Activated CD4-positive, alpha-beta T cell treated with anti-CD3 and anti-CD28 coated beads, Interleukin-2, amount 10 ng/mL, durations not matched to agents 24 days and 14 days (primary cell): ENCODE measurements at regions of chr7 and their contacts with region 1.

Region 1: GRCh38 chr7:157336383-157337315 is at the start of gene DNAJB6:
- DNase-seq: peak; percentile 99
- H3K4me3 Mint-ChIP-seq: peak within 1 kb of the TSS; percentile 97
- H3K27ac Mint-ChIP-seq: peak within 1 kb of the TSS; percentile 99
- H3K4me1 Mint-ChIP-seq: peaks cover 25% of the 10 kb centered on the region
- H3K27me3 Mint-ChIP-seq: peaks cover 18% of the 10 kb centered on the region
- total RNA-seq, gene DNAJB6: 125 and 128 TPM in 2 replicates

Region 2: GRCh38 chr7:156949541-156950380 is 386.9 kb before region 1 on chr7 and contains the start of gene NOM1:
- intact Hi-C with region 1: loop called (anchors 5 kb)
- DNase-seq: peak; percentile 98
- H3K4me3 Mint-ChIP-seq: peak within 1 kb of the TSS; percentile 100
- H3K27ac Mint-ChIP-seq: peak within 1 kb of the TSS; percentile 96
- H3K4me1 Mint-ChIP-seq: peaks cover 28% of the 10 kb centered on the region
- H3K27me3 Mint-ChIP-seq: peaks cover 16% of the 10 kb centered on the region
- total RNA-seq, gene NOM1: 50.5 and 54.5 TPM in 2 replicates

Region 3: DNA sequence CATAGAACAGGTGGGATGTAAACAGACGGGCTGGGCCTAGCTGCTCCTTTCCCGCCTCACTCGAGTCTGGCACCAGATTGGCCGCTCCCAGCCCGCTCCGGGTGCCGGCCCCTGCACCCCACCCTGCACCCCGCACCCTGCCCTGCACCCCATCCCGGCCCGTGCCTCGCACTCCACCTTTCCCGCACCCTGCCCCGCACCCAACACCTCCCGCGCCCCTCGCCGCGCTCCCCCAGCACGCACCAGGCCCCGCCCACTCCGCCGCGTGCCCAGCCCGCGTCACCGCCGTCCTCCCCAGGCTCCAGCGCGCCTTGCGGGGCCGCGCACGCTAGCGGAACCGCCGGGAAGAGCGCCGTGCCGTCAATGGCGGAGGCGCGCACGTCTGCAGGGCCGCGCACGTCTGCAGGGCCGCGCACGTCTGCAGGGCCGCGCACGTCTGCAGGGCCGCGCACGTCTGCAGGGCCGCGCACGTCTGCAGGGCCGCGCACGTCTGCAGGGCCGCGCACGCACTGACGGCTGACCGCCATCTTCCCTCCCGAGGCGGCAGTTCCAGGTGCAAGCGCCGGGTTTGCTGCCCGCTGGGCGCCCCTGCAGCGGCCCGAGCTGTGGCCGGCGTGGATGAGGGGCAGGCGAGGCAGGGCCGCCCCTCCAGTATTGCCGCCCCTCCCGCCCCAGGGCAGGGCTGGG is 198.1 kb before region 1 on chr7 and contains the start of gene UBE3C:
- intact Hi-C with region 1: loop called (anchors 2 kb)
- DNase-seq: peak; percentile 98
- H3K4me3 Mint-ChIP-seq: peak within 1 kb of the TSS; percentile 88
- H3K27ac Mint-ChIP-seq: peak within 1 kb of the TSS; percentile 99
- H3K4me1 Mint-ChIP-seq: peaks cover 31% of the 10 kb centered on the region
- H3K27me3 Mint-ChIP-seq: no peaks in the 10 kb centered on the region
- total RNA-seq, gene UBE3C: 89.9 and 95.4 TPM in 2 replicates

Region 4: GRCh38 chr7:157278791-157279724 is 57.6 kb before region 1 on chr7:
- intact Hi-C with region 1: loop called (anchors 1 kb)
- DNase-seq: peak; percentile 78
- H3K4me3 Mint-ChIP-seq: no peak overlapping the region
- H3K27ac Mint-ChIP-seq: no peak overlapping the region
- H3K4me1 Mint-ChIP-seq: peaks cover 13% of the 10 kb centered on the region
- H3K27me3 Mint-ChIP-seq: peaks cover 2% of the 10 kb centered on the region

Region 5: GRCh38 chr7:157299613-157300368 is 36.9 kb before region 1 on chr7:
- intact Hi-C with region 1: loop called (anchors 1 kb)
- DNase-seq: no peak
- H3K4me3 Mint-ChIP-seq: no peak overlapping the region
- H3K27ac Mint-ChIP-seq: peak overlapping the region; percentile 71
- H3K4me1 Mint-ChIP-seq: peaks cover 30% of the 10 kb centered on the region
- H3K27me3 Mint-ChIP-seq: no peaks in the 10 kb centered on the region

Region 6: DNA sequence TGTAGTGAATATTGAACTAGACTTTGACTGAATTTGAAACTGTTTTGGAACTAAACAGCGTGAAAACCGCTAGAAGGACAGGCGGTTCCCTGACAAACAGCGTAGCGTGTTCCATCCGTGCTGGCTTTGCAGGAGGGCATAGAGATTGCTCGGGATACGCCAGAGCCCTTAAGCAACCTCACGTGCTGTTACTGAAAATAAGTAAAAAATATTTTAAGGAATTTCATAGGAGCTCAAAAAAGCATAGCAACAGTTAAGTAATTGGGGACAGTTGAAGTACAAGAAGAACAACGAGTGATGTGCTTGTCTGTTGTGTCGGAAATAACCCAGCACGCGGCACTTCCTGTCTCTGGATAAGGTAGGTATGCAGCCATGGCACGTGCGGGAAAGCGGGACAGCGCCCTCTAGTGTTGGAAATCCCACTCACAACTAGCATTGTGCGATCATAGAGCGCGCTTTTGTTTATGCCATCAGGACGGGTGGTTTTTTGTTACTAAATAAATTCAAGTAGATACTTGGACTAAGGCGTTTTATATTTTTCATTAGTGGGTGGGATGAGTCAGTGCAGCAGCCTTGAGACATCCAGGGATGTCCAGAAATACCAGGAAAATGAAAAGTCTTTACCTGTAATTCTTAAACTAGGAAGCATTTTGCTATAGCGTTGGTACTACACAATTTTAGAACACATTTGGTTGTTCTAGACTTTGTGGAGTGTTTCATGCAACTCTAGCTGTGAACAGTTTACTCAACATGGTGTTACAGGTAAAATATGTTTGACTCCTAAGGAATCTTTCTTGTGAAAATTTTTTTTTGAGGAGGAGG is 50.5 kb after region 1 on chr7:
- intact Hi-C with region 1: loop called (anchors 2 kb)
- DNase-seq: peak; percentile 96
- H3K4me3 Mint-ChIP-seq: no peak overlapping the region
- H3K27ac Mint-ChIP-seq: peak overlapping the region; percentile 31
- H3K4me1 Mint-ChIP-seq: peaks cover 34% of the 10 kb centered on the region
- H3K27me3 Mint-ChIP-seq: no peaks in the 10 kb centered on the region

Region 7: DNA sequence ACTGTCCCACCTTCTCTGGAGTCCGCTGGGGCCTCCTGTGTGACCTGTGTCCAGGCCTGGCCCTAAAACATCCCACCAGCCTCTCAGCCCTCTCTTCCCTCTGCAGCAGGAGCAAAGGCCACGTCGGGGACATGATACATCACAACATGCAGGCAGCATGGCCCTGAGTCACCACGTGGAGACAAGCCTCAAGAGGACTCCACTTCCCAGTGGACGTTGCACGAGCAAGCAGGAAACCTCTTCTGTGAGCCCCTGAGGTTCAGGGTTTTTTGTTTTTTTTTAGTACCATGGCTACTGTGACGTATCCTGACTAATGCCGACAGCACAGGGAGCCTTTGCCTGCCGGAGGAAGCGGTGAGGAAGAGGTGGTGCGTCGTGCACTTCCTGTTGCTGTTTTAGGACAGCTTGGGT is 166.1 kb after region 1 on chr7:
- intact Hi-C with region 1: no loop called
- DNase-seq: peak; percentile 91
- H3K4me3 Mint-ChIP-seq: peak overlapping the region; percentile 78
- H3K27ac Mint-ChIP-seq: peak overlapping the region; percentile 87
- H3K4me1 Mint-ChIP-seq: peaks cover 22% of the 10 kb centered on the region
- H3K27me3 Mint-ChIP-seq: peaks cover 13% of the 10 kb centered on the region

Region 8: GRCh38 chr7:157863906-157864803 is 527.5 kb after region 1 on chr7:
- intact Hi-C with region 1: no loop called
- DNase-seq: no peak
- H3K4me3 Mint-ChIP-seq: no peak overlapping the region
- H3K27ac Mint-ChIP-seq: no peak overlapping the region
- H3K4me1 Mint-ChIP-seq: no peaks in the 10 kb centered on the region
- H3K27me3 Mint-ChIP-seq: no peaks in the 10 kb centered on the region